ENCODE measurements at regions of chr5 and their contacts with region 1.

Region 1: GRCh38 chr5:77491783-77492652 is at the start of gene WDR41:
- DNase-seq: peak; percentile 75 to 88 (median 82)
- H3K4me3 ChIP-seq: peak within 1 kb of the TSS; percentile 81
- H3K4me3 Mint-ChIP-seq: peak within 1 kb of the TSS; percentile 87 to 93 (median 91)
- H3K27ac ChIP-seq: peak within 1 kb of the TSS; percentile 78
- H3K27ac Mint-ChIP-seq: peak within 1 kb of the TSS; percentile 59 to 95 (median 89)
- H3K4me1 ChIP-seq: no peaks in the 10 kb centered on the region
- H3K4me1 Mint-ChIP-seq: peaks cover 20 to 49% (median 38%) of the 10 kb centered on the region in 3 donors
- H3K27me3 ChIP-seq: no peaks in the 10 kb centered on the region
- H3K27me3 Mint-ChIP-seq: peaks cover 5 to 8% of the 10 kb centered on the region in 2 donors
- total RNA-seq, gene WDR41: 28.6 to 35.2 TPM

Region 2: DNA sequence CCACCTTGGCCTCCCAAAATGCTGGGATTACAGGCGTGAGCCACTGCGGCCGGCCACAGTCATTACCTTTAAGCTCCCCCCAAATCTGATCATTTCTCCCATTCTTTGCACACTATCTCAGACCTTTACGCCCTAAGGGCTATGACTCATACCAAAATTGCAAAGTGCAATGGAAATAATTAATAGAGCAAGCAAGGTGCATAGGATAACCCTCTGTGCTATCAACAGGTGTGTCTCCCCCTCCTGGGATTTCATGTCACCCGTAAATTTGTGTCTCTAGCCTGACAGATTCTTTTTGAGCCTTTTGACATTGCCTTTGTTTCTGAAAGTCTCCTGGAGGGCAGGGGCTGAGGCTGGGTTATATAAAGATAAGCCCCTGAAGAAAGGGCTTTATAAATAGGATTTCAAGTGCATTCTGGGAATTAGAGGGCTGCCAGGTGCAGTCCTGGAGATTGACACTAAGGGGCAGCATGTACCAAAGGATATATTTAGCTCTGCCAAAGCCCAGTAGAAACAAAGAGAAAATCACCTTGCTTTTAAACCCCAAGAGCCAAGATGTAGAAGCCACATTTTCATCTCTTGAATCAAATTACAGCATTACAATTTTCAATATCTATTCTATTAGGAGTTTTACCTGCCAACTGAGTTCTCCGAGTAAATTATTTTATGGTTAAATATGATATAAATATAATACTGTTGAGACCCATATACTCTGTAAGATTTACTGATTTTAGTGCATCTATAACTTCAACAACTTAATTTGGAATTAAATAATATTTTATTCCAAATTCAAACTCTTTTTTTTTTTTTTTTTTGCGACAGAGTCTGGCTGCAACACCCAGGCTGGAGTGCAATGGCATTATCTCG is 624.0 kb before region 1 on chr5:
- CTCF ChIA-PET with region 1: interaction called, 10 read pairs
- POLR2A ChIA-PET with region 1: no interaction called
- DNase-seq: peak; percentile 15 to 65 (median 37)
- H3K4me3 ChIP-seq: no peak overlapping the region
- H3K4me3 Mint-ChIP-seq: no peak overlapping the region
- H3K27ac ChIP-seq: no peak overlapping the region
- H3K27ac Mint-ChIP-seq: peak overlapping the region in 1 of 8 donors; percentile 83
- H3K4me1 ChIP-seq: no peaks in the 10 kb centered on the region
- H3K4me1 Mint-ChIP-seq: no peaks in the 10 kb centered on the region
- H3K27me3 ChIP-seq: no peaks in the 10 kb centered on the region
- H3K27me3 Mint-ChIP-seq: peaks cover 0 to 3% of the 10 kb centered on the region in 2 donors

Region 3: DNA sequence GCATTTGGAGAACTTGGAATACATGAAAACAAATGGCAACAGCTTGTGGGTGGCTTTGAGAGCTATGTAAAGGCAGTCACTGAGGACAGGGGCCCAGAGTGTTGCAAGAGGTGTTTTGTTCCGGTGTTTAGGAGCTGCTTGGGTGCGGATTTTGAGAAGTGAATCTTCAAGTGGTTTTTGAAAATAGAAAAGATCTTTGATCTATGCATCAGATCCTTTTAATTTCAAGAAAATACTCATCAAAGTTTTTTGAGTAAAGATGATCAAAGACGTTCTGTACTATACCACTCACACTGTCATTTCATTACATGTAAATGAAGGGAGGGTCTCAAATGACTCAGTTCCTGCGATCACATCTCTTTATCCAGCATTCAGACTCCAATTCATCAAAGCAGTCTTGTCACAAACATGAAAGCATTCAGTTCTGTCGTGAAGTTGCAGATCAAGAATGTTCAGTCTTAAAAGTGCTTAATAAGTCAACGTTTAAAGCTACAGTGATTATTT is 112.4 kb before region 1 on chr5:
- CTCF ChIA-PET with region 1: no interaction called
- POLR2A ChIA-PET with region 1: no interaction called
- DNase-seq: peak in 2 of 5 donors; percentile 2 to 17
- H3K4me3 ChIP-seq: no peak overlapping the region
- H3K4me3 Mint-ChIP-seq: peak overlapping the region in 2 of 7 donors; percentile 0 to 30
- H3K27ac ChIP-seq: no peak overlapping the region
- H3K27ac Mint-ChIP-seq: peak overlapping the region in 6 of 8 donors; percentile 4 to 78 (median 52)
- H3K4me1 ChIP-seq: peaks cover 20% of the 10 kb centered on the region
- H3K4me1 Mint-ChIP-seq: peaks cover 11 to 19% (median 17%) of the 10 kb centered on the region in 3 donors
- H3K27me3 ChIP-seq: no peaks in the 10 kb centered on the region
- H3K27me3 Mint-ChIP-seq: peaks cover 0 to 2% of the 10 kb centered on the region in 2 donors

Region 4: GRCh38 chr5:77409870-77410610 is 82.0 kb before region 1 on chr5:
- CTCF ChIA-PET with region 1: no interaction called
- POLR2A ChIA-PET with region 1: no interaction called
- DNase-seq: no peak
- H3K4me3 ChIP-seq: no peak overlapping the region
- H3K4me3 Mint-ChIP-seq: no peak overlapping the region
- H3K27ac ChIP-seq: no peak overlapping the region
- H3K27ac Mint-ChIP-seq: no peak overlapping the region
- H3K4me1 ChIP-seq: no peaks in the 10 kb centered on the region
- H3K4me1 Mint-ChIP-seq: peaks cover 0 to 7% (median 5%) of the 10 kb centered on the region in 3 donors
- H3K27me3 ChIP-seq: no peaks in the 10 kb centered on the region
- H3K27me3 Mint-ChIP-seq: peaks cover 5 to 16% of the 10 kb centered on the region in 2 donors